Left ventricle myocardium inferior (tissue), 1 donor: ENCODE measurements at regions of chr4 and their contacts with region 1.

Region 1: GRCh38 chr4:8241895-8242696 is 27.5 kb upstream of the HTRA3 start:
- DNase-seq: peak; percentile 88
- H3K4me3 ChIP-seq: no peak overlapping the region
- H3K27ac ChIP-seq: peak overlapping the region; percentile 66
- H3K4me1 ChIP-seq: peaks cover 22% of the 10 kb centered on the region
- H3K27me3 ChIP-seq: no peaks in the 10 kb centered on the region
- CTCF ChIP-seq: peak; percentile 99

Region 2: GRCh38 chr4:8330821-8331574 is 88.9 kb after region 1 on chr4:
- intact Hi-C with region 1: no loop called
- DNase-seq: peak; percentile 85
- H3K4me3 ChIP-seq: no peak overlapping the region
- H3K27ac ChIP-seq: peak overlapping the region; percentile 87
- H3K4me1 ChIP-seq: peaks cover 32% of the 10 kb centered on the region
- H3K27me3 ChIP-seq: no peaks in the 10 kb centered on the region
- CTCF ChIP-seq: peak; percentile 42

Region 3: GRCh38 chr4:8342651-8343261 is 100.7 kb after region 1 on chr4:
- intact Hi-C with region 1: no loop called
- DNase-seq: peak; percentile 18
- H3K4me3 ChIP-seq: no peak overlapping the region
- H3K27ac ChIP-seq: peak overlapping the region; percentile 92
- H3K4me1 ChIP-seq: peaks cover 45% of the 10 kb centered on the region
- H3K27me3 ChIP-seq: no peaks in the 10 kb centered on the region
- CTCF ChIP-seq: no peak

Region 4: DNA sequence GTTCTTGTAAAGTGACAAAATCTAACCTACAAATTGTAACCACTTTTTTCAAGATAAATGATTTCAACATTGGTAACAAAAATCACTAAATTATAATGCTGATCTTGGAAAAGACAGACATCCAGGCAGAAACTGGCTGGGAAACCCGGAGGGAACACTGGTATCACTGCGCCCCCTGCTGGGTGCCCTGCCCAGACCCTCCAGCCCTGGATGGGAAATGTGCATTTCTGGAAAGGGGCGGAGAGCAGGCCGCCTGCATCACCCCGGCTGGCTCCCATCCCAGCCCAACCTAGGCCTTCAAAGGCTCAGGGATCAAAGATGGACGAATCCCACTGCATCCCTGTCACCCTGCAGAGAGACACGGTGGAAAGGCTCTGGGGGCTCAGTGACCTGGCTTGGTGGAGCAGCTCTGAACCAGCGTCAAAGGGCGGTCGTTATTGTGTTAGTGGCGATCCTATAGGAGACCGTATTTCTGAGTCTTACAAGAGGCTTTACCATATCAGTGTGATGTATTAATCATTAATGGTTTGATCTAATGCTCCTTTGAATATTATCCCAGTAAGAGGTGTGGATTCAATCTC is 161.2 kb after region 1 on chr4:
- intact Hi-C with region 1: loop called (anchors 5 kb)
- DNase-seq: peak; percentile 89
- H3K4me3 ChIP-seq: no peak overlapping the region
- H3K27ac ChIP-seq: peak overlapping the region; percentile 81
- H3K4me1 ChIP-seq: peaks cover 55% of the 10 kb centered on the region
- H3K27me3 ChIP-seq: no peaks in the 10 kb centered on the region
- CTCF ChIP-seq: peak; percentile 96